Transverse colon (tissue), 4 donors: ENCODE measurements at regions of chr10 and their contacts with region 1.

Region 1: DNA sequence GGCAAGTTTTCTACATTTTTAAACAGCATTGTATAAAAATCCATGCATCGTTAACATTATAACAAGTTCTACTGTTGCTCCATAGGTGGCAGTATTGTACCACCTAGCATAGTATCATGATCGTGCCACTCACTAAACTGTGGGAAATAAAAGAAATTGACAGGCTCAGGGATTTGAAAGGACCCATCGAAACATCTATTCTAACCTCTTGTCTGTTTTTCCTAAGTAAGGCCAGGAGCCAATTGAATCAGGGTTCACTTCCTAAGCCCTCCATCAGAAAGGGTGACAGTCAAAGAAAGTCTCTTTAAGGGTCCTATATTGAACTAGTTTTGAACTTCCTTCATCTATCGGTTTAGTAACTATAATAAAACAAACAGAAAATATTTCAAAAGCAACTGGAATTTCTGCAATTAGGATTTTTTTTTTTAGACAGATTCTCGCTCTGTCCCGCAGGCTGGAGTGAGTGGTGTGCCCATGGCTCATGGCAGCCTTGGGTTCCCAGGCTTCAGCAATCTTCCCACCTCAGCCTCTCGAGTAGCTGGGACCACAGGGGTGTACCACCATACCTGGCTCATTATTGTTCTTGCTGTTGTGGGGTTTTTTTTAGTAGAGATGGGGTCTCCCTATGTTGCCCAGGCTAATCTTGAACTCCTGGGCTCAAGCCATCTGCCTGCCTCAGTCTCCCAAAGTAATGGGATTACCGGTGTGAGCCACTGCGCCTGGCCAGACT is 9.4 kb downstream of the HACD1 start:
- DNase-seq: no peak
- H3K4me3 ChIP-seq: no peak overlapping the region
- H3K27ac ChIP-seq: no peak overlapping the region
- H3K4me1 ChIP-seq: peaks cover 0 to 11% (median 6%) of the 10 kb centered on the region in 4 donors
- H3K27me3 ChIP-seq: no peaks in the 10 kb centered on the region
- CTCF ChIP-seq: peak; percentile 82 to 90 (median 84)
- EP300 ChIP-seq: no peak
- POLR2A ChIP-seq: no peak

Region 2: GRCh38 chr10:17737027-17737965 is 129.5 kb after region 1 on chr10:
- in situ Hi-C with region 1: loop called (anchors 5 to 10 kb)
- intact Hi-C with region 1: loop called (anchors 2 kb)
- DNase-seq: no peak
- H3K4me3 ChIP-seq: no peak overlapping the region
- H3K27ac ChIP-seq: no peak overlapping the region
- H3K4me1 ChIP-seq: peaks cover 0 to 1% (median 0%) of the 10 kb centered on the region in 4 donors
- H3K27me3 ChIP-seq: no peaks in the 10 kb centered on the region
- CTCF ChIP-seq: peak; percentile 61 to 71 (median 62)
- EP300 ChIP-seq: no peak
- POLR2A ChIP-seq: no peak

Region 3: DNA sequence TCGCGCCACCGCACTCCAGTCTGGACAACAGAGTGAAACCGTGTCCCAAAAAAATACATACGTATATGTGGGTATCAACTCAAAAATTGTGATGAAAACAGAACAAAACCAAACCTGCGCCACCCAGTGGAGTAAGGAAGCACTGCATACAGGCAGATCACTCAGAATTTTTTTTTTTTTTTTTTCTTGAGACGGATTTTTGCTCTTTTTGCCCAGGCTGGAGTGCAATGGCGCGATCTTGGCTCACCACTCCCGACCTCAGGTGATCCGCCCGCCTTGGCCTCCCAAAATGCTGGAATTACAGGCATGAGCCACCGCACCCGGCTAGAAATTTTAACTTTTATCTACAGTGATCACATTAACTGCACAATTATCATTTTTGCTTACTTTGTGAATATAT is 135.2 kb after region 1 on chr10:
- in situ Hi-C with region 1: loop called (anchors 5 to 10 kb)
- intact Hi-C with region 1: loop called (anchors 2 kb)
- DNase-seq: peak; percentile 66
- H3K4me3 ChIP-seq: no peak overlapping the region
- H3K27ac ChIP-seq: no peak overlapping the region
- H3K4me1 ChIP-seq: peaks cover 0 to 20% (median 9%) of the 10 kb centered on the region in 4 donors
- H3K27me3 ChIP-seq: no peaks in the 10 kb centered on the region
- CTCF ChIP-seq: peak; percentile 87 to 97 (median 89)
- EP300 ChIP-seq: no peak
- POLR2A ChIP-seq: no peak

Region 4: GRCh38 chr10:17756557-17757217 is 148.9 kb after region 1 on chr10:
- in situ Hi-C with region 1: no loop called
- intact Hi-C with region 1: no loop called
- DNase-seq: peak; percentile 33
- H3K4me3 ChIP-seq: peak overlapping the region in 3 of 4 donors; percentile 16 to 39 (median 22)
- H3K27ac ChIP-seq: peak overlapping the region; percentile 74 to 81 (median 78)
- H3K4me1 ChIP-seq: peaks cover 7 to 71% (median 43%) of the 10 kb centered on the region in 4 donors
- H3K27me3 ChIP-seq: no peaks in the 10 kb centered on the region
- CTCF ChIP-seq: no peak
- EP300 ChIP-seq: peak; percentile 1
- POLR2A ChIP-seq: no peak

Region 5: GRCh38 chr10:17872191-17873091 is 264.7 kb after region 1 on chr10:
- in situ Hi-C with region 1: loop called in 3 of 4 experiments (anchors 10 to 25 kb)
- intact Hi-C with region 1: no loop called
- DNase-seq: peak; percentile 16
- H3K4me3 ChIP-seq: no peak overlapping the region
- H3K27ac ChIP-seq: no peak overlapping the region
- H3K4me1 ChIP-seq: peaks cover 0 to 10% (median 0%) of the 10 kb centered on the region in 4 donors
- H3K27me3 ChIP-seq: no peaks in the 10 kb centered on the region
- CTCF ChIP-seq: peak; percentile 22 to 52 (median 39)
- EP300 ChIP-seq: no peak
- POLR2A ChIP-seq: no peak